CD4-positive, alpha-beta T cell (primary cell): ENCODE measurements at regions of chrX and their contacts with region 1.

Region 1: DNA sequence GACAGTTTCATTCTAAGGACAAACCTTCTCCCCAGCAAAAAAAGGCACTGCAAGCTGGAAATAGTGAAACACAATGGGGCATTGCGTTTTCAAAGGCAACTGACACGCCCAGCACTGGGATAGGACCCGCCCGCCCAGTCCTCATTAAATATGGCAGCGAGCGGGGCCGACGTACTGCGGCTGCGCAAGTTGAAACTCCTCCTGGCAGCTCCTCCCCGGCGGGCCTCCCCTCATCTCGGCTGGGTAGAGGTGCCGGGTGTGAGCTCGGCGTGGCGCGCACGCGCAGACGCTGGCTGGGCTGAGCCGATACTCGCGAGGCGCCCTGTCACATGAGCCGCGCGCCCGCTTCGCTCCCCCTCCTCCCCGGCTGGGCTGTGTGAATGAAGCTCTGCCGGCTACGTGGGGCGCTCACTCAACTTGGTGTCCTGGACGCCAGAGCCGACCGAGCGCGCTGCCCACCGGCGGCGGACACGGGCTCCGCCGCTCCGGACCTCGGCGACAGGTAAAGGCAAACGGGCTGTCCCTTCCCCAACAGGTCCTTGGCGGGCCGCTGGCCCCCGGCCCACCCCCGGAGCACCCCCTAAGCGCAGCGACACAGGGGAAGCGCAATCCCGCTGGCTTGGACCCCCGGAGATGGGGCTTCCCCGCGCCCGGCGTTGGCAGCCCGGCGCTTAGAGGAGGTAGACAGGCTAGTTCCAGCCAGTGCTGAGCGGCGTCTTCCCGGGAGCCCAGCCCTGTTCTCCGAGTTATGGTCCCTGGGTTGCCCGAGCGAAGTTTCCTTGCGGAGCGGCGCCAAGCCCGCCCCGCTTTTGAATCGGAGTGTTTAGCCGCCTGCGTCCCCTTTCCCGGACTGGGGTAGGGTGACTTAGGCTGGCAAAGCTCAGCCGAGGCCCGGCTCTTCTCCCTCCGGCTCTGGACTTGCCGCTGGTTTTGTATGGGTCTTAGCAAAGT is at the start of gene CLCN5:
- DNase-seq: peak; percentile 85 to 98 (median 94)
- ATAC-seq: peak; percentile 94
- H3K4me3 ChIP-seq: peak within 1 kb of the TSS; percentile 71
- H3K4me3 Mint-ChIP-seq: peak within 1 kb of the TSS; percentile 89
- H3K27ac ChIP-seq: no peak within 1 kb of the TSS
- H3K27ac Mint-ChIP-seq: peak within 1 kb of the TSS; percentile 64
- H3K4me1 ChIP-seq: peaks cover 8% of the 10 kb centered on the region
- H3K4me1 Mint-ChIP-seq: peaks cover 12% of the 10 kb centered on the region
- H3K27me3 ChIP-seq: no peaks in the 10 kb centered on the region
- H3K27me3 Mint-ChIP-seq: no peaks in the 10 kb centered on the region
- CTCF ChIP-seq: no peak
- total RNA-seq, gene CLCN5: 0.61 to 1.6 TPM

Region 2: GRCh38 chrX:49710729-49711304 is 211.7 kb before region 1 on chrX:
- CTCF ChIA-PET with region 1: no interaction called
- POLR2A ChIA-PET with region 1: no interaction called
- intact Hi-C with region 1: no loop called
- DNase-seq: no peak
- ATAC-seq: no peak
- H3K4me3 ChIP-seq: no peak overlapping the region
- H3K4me3 Mint-ChIP-seq: no peak overlapping the region
- H3K27ac ChIP-seq: no peak overlapping the region
- H3K27ac Mint-ChIP-seq: no peak overlapping the region
- H3K4me1 ChIP-seq: no peaks in the 10 kb centered on the region
- H3K4me1 Mint-ChIP-seq: no peaks in the 10 kb centered on the region
- H3K27me3 ChIP-seq: no peaks in the 10 kb centered on the region
- H3K27me3 Mint-ChIP-seq: peaks cover 2% of the 10 kb centered on the region
- CTCF ChIP-seq: no peak

Region 3: GRCh38 chrX:49878834-49879659 is 43.5 kb before region 1 on chrX and contains the start of gene USP27X:
- CTCF ChIA-PET with region 1: interaction called, 12 read pairs
- POLR2A ChIA-PET with region 1: interaction called, 4 read pairs
- intact Hi-C with region 1: loop called (anchors 2 to 5 kb)
- DNase-seq: peak; percentile 63 to 93 (median 76)
- ATAC-seq: peak; percentile 88
- H3K4me3 ChIP-seq: peak within 1 kb of the TSS; percentile 64
- H3K4me3 Mint-ChIP-seq: peak within 1 kb of the TSS; percentile 89
- H3K27ac ChIP-seq: peak within 1 kb of the TSS; percentile 46 to 62
- H3K27ac Mint-ChIP-seq: peak within 1 kb of the TSS; percentile 89
- H3K4me1 ChIP-seq: peaks cover 32% of the 10 kb centered on the region
- H3K4me1 Mint-ChIP-seq: peaks cover 30% of the 10 kb centered on the region
- H3K27me3 ChIP-seq: no peaks in the 10 kb centered on the region
- H3K27me3 Mint-ChIP-seq: no peaks in the 10 kb centered on the region
- CTCF ChIP-seq: peak; percentile 32
- total RNA-seq, gene USP27X: 2.7 to 3.2 TPM

Region 4: DNA sequence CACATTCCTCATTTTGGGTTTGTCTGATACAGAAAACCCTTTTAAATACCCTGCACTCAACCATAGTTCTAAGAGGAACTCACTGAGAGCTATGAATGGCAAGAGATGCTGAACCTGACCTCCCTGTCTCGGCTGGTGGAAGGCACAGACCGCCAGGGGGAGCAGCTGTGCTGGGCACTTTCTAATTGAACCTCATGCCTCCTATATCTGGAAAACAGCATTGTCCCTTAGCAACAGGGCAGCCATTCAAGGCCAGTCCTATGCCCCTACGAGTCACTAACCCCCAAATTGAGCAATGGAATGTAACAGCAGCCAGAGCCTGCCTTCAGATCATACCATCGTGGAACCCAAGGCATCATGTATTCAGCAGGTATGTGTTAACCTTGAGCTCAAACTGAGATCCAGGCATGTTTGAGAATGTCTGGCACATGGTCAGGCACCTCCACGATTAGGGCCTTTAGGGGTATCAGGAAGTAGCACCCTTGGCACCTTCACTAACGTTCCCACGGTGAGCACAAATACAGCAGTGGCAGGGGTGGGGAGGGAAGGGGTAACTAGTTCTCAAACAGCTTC is 38.2 kb before region 1 on chrX:
- CTCF ChIA-PET with region 1: interaction called, 12 read pairs
- POLR2A ChIA-PET with region 1: no interaction called
- intact Hi-C with region 1: loop called (anchors 2 to 5 kb)
- DNase-seq: peak; percentile 18 to 72 (median 45)
- ATAC-seq: no peak
- H3K4me3 ChIP-seq: no peak overlapping the region
- H3K4me3 Mint-ChIP-seq: peak overlapping the region; percentile 62
- H3K27ac ChIP-seq: no peak overlapping the region
- H3K27ac Mint-ChIP-seq: no peak overlapping the region
- H3K4me1 ChIP-seq: peaks cover 21% of the 10 kb centered on the region
- H3K4me1 Mint-ChIP-seq: peaks cover 19% of the 10 kb centered on the region
- H3K27me3 ChIP-seq: no peaks in the 10 kb centered on the region
- H3K27me3 Mint-ChIP-seq: no peaks in the 10 kb centered on the region
- CTCF ChIP-seq: peak; percentile 54

Region 5: DNA sequence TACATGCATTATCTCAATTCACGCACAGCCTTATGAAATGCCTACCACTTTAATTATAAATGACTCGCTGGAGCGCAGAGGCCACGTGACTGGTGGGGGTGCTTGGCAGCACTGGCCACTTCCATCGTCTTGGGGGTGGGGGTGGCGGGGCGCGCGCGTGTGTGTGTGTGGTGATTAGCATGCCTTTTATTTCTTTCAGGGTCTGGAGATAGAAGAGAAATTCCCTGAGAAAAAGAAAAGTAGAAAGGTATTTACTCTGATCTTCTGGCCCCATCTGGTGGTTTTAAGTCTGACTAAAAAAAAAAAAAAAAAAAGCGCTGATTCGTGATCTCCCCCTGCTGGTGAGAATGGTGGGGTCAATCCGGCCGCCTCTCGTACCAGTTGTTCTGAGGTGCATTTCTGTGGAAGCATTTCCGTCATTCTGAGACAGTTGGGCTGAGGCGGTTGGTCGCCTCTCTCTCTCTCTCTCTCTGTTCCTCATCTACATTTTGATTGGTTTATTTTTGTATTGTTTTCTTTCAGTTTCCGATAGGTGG is 281.9 kb after region 1 on chrX and contains the start of gene CCNB3:
- CTCF ChIA-PET with region 1: interaction called, 3 read pairs
- POLR2A ChIA-PET with region 1: interaction called, 4 read pairs
- intact Hi-C with region 1: loop called (anchors 2 kb)
- DNase-seq: peak; percentile 51 to 89 (median 59)
- ATAC-seq: peak; percentile 97
- H3K4me3 ChIP-seq: peak within 1 kb of the TSS; percentile 48
- H3K4me3 Mint-ChIP-seq: peak within 1 kb of the TSS; percentile 90
- H3K27ac ChIP-seq: peak within 1 kb of the TSS in 1 of 2 donors; percentile 55
- H3K27ac Mint-ChIP-seq: peak within 1 kb of the TSS; percentile 87
- H3K4me1 ChIP-seq: peaks cover 6% of the 10 kb centered on the region
- H3K4me1 Mint-ChIP-seq: peaks cover 17% of the 10 kb centered on the region
- H3K27me3 ChIP-seq: no peaks in the 10 kb centered on the region
- H3K27me3 Mint-ChIP-seq: no peaks in the 10 kb centered on the region
- CTCF ChIP-seq: peak; percentile 61
- total RNA-seq, gene CCNB3: 0.19 to 0.39 TPM